PC-3 (cell line): ENCODE measurements at regions of chr20 and their contacts with region 1.

Region 1: DNA sequence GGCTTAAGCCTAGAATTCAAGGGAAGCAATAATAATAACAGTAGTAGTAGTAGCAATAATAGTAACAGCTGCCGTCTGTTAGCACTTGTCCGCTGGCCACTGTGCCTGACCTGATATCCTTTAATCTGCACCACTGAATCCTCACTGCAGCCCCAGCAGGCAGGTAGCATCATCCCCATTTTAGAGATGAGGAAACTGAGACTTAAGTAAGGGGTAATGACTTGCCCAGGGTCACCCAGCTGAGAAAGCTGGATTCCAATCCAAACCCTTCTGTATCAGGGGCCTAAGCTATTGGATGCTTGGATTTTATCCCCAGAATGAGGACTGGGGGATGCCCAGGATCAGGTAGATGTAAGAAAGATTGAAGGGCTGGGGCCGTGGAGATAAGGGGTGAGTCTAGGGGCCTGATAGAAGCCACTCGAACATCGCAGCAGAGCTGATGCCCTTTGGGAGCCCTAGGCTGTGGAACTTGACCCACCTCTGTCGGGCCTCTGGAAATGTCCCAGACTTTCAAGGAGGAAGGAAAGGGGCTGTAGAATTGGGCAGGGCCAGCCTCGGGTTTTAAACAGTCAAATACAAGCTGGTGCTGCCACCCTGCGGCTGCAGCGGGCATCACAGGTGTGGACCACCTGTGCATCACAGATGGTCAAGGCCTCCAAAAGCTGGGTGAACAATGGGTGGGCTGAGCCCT is 102.1 kb upstream of the MYL9 start:
- DNase-seq: peak; percentile 78
- ATAC-seq: peak; percentile 76
- H3K4me3 ChIP-seq: no peak overlapping the region
- H3K27ac ChIP-seq: no peak overlapping the region
- H3K4me1 ChIP-seq: no peaks in the 10 kb centered on the region
- H3K27me3 ChIP-seq: no peaks in the 10 kb centered on the region
- CTCF ChIP-seq: peak; percentile 96

Region 2: DNA sequence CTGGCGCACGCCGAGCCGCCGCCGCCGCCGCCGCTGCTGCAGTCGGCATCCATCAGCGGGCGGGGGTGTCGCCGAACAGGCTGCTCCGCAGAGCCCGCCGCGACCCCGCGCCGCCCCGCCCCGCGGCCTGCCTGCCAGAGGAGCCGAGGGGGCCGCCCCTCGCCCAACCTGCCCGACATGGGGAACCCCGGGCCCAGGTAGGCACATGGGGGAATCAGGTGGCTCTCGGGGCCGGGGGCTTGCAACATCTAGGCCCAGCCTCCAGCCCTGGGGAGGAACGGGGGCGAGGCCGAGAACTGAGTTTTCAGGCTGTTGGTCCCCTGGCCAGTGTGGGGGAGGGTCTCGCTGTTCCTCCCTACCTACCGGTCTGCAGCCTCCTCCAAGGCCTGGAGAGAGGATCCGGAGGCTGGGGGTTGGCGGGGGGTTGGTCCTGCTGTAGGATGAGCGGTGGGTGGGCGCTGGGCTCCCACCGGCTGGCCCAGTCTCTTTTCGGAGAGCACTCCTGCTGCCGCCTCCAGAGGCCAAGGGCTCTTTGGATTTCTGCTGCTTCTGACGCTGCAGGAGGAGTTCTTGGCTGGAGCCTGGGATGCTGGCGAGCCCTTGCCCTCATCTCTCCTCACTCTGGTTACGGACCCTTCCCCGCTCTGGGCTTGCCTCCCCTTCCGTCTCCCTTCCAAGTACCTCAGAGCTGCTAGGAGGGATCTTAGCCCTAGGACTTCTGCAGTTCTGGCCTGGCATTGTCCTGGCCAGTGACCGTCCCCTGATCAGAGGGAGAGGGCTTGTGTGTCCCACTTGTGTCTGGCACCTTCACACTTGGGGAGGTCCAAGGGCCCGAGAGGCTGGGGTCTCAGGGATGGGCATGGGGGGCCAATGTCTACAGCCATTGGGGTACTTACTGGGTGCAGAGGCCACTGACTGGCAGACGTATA is 284.2 kb before region 1 on chr20 and contains the start of gene EPB41L1:
- CTCF ChIA-PET with region 1: no interaction called
- POLR2A ChIA-PET with region 1: no interaction called
- intact Hi-C with region 1: loop called (anchors 2 kb)
- DNase-seq: peak; percentile 11
- ATAC-seq: peak; percentile 15
- H3K4me3 ChIP-seq: peak within 1 kb of the TSS; percentile 87
- H3K27ac ChIP-seq: no peak within 1 kb of the TSS
- H3K4me1 ChIP-seq: peaks cover 17% of the 10 kb centered on the region
- H3K27me3 ChIP-seq: no peaks in the 10 kb centered on the region
- CTCF ChIP-seq: no peak
- total RNA-seq, gene EPB41L1: 48.2 and 53.0 TPM in 2 replicates

Region 3: DNA sequence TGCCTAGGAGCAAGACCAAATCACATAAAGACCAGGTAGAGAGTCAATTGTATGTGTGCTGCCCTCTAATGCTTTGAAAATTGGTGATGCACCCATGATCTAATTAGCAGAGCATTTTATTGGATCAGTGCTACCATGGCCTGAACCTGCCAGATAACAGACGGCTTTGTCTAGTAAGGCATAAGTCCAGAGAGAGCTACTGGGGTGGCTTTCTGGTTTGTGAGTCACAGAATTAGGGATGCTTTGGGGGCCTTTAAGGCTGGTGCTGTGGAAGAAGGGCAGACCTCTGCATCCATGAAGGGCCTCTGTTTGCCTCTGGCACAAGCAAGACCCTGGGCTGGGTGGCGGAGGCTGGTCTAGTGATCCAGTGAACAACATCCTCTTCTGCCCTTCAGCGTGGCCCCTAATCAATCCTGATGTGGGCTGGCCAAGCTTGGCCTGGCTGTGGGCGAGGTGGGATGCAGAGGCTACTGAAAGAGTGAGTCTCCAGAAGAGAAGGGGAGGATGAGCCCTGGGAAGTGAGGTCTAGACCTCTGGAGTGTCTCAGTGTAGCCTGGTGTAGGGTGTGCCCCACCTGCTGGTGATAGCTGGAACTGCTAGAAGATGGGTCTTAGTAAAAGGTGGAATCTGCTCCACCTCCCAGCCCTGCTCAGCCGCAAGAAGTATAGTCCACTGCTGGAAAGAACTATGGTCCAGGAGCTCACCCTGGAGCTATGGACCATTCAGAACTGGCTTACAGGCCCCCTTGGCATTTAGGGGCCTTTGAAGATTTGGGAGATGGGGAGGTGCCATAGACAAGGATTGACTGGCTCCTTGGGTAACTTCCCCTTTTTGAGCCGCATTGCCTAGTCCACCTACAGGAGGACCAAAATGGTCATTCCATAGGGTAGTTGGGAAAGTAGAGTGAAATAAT is 239.6 kb before region 1 on chr20:
- CTCF ChIA-PET with region 1: interaction called, 5 read pairs
- POLR2A ChIA-PET with region 1: no interaction called
- intact Hi-C with region 1: loop called (anchors 1 kb)
- DNase-seq: peak; percentile 88
- ATAC-seq: peak; percentile 90
- H3K4me3 ChIP-seq: no peak overlapping the region
- H3K27ac ChIP-seq: no peak overlapping the region
- H3K4me1 ChIP-seq: no peaks in the 10 kb centered on the region
- H3K27me3 ChIP-seq: no peaks in the 10 kb centered on the region
- CTCF ChIP-seq: peak; percentile 90

Region 4: DNA sequence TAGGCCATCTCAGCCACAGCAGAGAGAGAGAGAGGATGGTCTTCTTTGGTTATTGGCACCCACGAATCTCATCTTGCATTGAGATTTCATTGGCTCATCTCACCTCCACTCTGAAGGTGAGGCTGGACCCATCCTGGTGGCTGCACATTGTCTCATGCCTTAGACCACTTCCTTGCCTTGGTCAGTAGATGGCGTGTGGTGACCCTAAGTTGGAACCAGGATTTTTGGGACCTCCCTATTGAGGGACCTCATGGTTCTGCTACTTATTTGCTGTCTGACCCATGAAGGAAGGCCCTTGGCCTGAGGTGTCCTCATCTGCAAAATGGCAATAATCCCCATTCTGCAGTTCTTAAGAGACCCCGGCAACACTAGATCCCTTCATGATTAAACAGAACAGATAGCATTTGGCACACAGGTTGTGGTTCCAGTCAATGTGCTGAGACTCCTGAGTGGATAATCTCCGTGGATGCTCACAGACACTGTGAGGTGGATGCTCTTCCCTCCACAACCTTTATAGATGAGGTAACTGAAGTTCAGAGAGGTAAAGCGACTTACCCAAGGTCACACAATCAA is 224.4 kb before region 1 on chr20:
- CTCF ChIA-PET with region 1: interaction called, 3 read pairs
- POLR2A ChIA-PET with region 1: no interaction called
- intact Hi-C with region 1: loop called (anchors 2 kb)
- DNase-seq: peak; percentile 52
- ATAC-seq: peak; percentile 68
- H3K4me3 ChIP-seq: no peak overlapping the region
- H3K27ac ChIP-seq: no peak overlapping the region
- H3K4me1 ChIP-seq: no peaks in the 10 kb centered on the region
- H3K27me3 ChIP-seq: no peaks in the 10 kb centered on the region
- CTCF ChIP-seq: peak; percentile 77

Region 5: DNA sequence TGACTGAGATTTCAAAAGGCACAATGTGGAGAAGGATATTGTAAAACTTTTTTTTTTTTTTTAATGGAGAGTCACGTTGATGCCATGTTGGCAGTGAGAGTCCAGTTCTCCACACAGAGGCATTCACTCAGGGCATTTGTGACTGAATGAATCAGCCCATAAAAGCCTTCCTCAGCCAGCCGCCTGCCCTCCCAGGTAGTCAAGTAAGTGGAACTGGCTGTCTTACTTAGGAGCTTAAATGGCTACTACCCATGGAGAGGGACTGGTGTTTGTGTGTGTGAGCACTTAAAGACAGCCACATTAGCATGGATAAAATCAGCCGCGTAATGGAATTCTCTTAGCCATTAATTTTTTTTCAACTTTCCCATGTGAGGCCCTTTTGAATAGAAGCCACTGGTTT is 190.3 kb before region 1 on chr20:
- CTCF ChIA-PET with region 1: no interaction called
- POLR2A ChIA-PET with region 1: no interaction called
- intact Hi-C with region 1: loop called (anchors 1 kb)
- DNase-seq: peak; percentile 46
- ATAC-seq: peak; percentile 97
- H3K4me3 ChIP-seq: no peak overlapping the region
- H3K27ac ChIP-seq: no peak overlapping the region
- H3K4me1 ChIP-seq: 0 out of 2 replicates have a peak, but pooled peaks cover 2% of the 10 kb centered on the region
- H3K27me3 ChIP-seq: no peaks in the 10 kb centered on the region
- CTCF ChIP-seq: no peak

Region 6: DNA sequence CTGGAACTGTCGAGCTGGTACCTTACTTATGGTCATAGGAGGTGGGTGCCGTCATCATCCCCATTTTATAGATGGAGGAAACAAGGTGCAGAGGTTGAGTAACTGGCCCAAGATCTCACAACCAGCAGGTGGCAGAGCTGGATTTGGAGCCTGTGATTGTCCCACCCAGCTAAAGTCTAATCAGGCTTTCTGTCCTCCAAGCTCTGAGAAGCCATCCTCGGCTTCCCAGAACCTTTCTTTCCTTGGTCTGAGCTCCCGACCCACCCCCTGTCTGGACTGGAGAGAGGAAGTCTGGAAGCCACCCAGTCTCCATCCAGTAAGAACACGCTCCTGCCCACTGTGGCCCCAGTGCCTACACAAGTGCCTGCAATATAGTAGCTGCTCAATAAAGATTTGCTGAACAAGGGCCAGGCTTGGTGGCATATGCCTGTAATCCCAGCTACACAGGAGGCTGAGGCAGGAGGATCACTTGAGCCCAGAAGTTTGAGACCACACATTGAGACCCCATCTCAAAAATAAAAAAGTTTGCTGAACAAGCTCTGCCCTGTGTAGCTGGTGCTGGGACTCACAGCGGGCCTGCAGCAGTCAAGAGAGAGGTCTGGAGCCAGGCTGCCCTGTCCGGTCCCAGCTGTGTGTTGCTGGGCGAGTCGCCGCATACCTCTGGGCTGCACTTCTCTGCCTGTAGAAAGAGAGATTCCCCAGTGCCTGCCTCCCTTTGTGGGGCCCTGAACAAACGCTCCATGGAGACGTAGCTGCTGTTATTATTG is 165.6 kb before region 1 on chr20:
- CTCF ChIA-PET with region 1: interaction called, 13 read pairs
- POLR2A ChIA-PET with region 1: no interaction called
- intact Hi-C with region 1: loop called (anchors 1 kb)
- DNase-seq: peak; percentile 66
- ATAC-seq: peak; percentile 74
- H3K4me3 ChIP-seq: no peak overlapping the region
- H3K27ac ChIP-seq: no peak overlapping the region
- H3K4me1 ChIP-seq: no peaks in the 10 kb centered on the region
- H3K27me3 ChIP-seq: peaks cover 17% of the 10 kb centered on the region
- CTCF ChIP-seq: peak; percentile 72